Naive thymus-derived CD4-positive, alpha-beta T cell (primary cell): ENCODE measurements at regions of chr5 and their contacts with region 1.

Region 1: DNA sequence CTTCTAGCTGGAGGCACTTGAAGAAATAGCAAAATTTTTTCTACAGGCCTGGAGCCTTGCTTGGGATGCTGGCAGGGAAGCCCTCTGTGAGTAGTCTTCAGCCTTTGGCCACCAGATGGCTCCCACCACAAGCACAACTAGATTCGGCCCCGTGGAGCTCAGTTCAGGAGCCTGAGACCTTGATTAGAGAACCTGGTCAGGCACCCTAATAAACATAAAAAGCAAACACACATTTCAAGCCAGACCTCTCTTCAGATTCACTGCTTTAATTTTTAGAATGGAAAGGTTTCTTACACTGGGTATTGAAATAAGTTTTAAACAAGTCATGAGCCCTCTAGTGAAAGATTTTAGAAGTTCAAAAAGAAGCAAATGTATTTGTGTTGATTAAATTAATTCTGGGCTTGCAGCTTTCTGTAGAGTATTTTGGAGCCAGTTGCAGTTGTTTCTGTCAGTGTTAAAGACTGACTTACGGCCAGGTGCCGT is 41.4 kb downstream of the GLRX start:
- DNase-seq: peak; percentile 38 to 77 (median 71)
- ATAC-seq: peak; percentile 93
- H3K4me3 ChIP-seq: peak overlapping the region; percentile 45
- H3K4me3 Mint-ChIP-seq: peak overlapping the region in 9 of 10 donors; percentile 52 to 85 (median 84)
- H3K27ac ChIP-seq: peak overlapping the region; percentile 39
- H3K27ac Mint-ChIP-seq: peak overlapping the region in 8 of 9 donors; percentile 48 to 84 (median 62)
- H3K4me1 ChIP-seq: no peaks in the 10 kb centered on the region
- H3K4me1 Mint-ChIP-seq: peaks cover 0 to 21% (median 19%) of the 10 kb centered on the region in 7 donors
- H3K27me3 ChIP-seq: no peaks in the 10 kb centered on the region
- H3K27me3 Mint-ChIP-seq: peaks cover 0 to 8% (median 0%) of the 10 kb centered on the region in 5 donors

Region 2: DNA sequence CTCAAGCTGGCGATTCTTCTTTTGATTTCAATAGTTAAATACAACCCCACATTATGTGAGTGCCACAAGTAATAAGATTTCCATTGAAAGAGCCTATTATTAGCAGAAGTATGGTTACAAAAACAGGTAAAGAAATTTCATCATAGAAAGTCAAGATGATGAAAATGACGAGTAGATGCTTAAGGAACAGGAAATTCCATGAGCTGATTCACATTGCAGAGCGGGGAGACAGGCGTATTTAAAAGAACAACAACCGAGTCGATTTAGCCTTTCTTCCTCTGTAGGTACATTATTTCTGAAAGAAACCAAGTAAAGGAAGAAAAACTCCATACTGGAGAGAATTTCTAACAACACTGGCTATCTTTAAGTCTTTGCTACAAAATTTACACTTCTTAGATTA is 852.3 kb before region 1 on chr5:
- CTCF ChIA-PET with region 1: no interaction called
- POLR2A ChIA-PET with region 1: no interaction called
- intact Hi-C with region 1: no loop called
- DNase-seq: no peak
- ATAC-seq: no peak
- H3K4me3 ChIP-seq: no peak overlapping the region
- H3K4me3 Mint-ChIP-seq: no peak overlapping the region
- H3K27ac ChIP-seq: no peak overlapping the region
- H3K27ac Mint-ChIP-seq: no peak overlapping the region
- H3K4me1 ChIP-seq: no peaks in the 10 kb centered on the region
- H3K4me1 Mint-ChIP-seq: no peaks in the 10 kb centered on the region
- H3K27me3 ChIP-seq: no peaks in the 10 kb centered on the region
- H3K27me3 Mint-ChIP-seq: peaks cover 0 to 5% (median 0%) of the 10 kb centered on the region in 5 donors

Region 3: DNA sequence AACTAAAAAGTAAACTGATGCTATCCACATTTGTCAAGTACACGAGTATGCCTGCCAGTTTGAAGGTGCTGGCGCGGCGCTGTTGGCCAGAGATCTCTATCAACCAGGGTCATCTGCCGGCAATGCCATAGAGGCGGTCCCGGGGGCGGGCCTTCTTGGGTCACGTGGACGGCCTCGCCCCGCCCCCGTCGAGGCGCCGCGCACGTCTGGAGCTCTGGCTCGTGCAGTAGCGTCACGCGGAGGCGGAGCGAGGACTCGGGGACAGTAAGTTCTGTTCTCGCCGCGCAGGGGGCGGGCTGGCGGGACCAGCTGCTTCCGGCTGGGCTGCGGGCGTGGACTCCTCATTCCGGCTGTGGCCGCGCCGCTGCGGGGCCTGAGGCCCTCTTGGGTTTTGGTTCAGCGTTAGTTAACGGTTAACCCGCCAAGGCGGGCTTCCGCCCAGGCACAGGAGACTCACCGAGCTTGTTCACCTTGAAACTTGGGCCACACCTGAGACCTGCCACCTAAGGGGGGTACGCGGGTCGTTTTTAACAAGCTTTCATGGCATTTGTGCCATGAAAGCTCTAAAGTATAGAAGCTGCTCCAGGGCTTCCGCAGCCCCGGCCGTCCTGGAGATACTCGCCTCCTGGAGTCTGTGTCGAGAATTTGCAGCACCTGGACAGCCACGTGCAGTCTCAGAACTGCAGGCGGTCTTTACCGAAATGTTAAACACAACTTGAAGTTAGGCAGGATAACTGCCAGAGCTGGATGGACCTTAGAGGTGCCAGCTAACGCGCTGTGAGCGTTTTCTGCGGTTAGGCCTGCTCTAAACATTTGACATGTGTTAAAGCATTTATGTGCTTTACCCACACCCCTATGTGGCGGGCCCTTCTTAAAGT is 134.3 kb before region 1 on chr5 and contains the start of gene RFESD:
- CTCF ChIA-PET with region 1: interaction called, 20 read pairs
- POLR2A ChIA-PET with region 1: interaction called, 4 read pairs
- intact Hi-C with region 1: loop called (anchors 1 kb)
- DNase-seq: peak; percentile 84 to 94 (median 90)
- ATAC-seq: peak; percentile 98
- H3K4me3 ChIP-seq: peak within 1 kb of the TSS; percentile 80
- H3K4me3 Mint-ChIP-seq: peak within 1 kb of the TSS; percentile 84 to 93 (median 88)
- H3K27ac ChIP-seq: peak within 1 kb of the TSS; percentile 80
- H3K27ac Mint-ChIP-seq: peak within 1 kb of the TSS; percentile 71 to 95 (median 89)
- H3K4me1 ChIP-seq: peaks cover 0 to 18% of the 10 kb centered on the region in 2 donors
- H3K4me1 Mint-ChIP-seq: peaks cover 7 to 53% (median 40%) of the 10 kb centered on the region in 7 donors
- H3K27me3 ChIP-seq: no peaks in the 10 kb centered on the region
- H3K27me3 Mint-ChIP-seq: no peaks in the 10 kb centered on the region
- total RNA-seq, gene RFESD: 2.2 to 9.2 (median 6.5) TPM

Region 4: GRCh38 chr5:95770830-95771708 is 10.1 kb before region 1 on chr5:
- CTCF ChIA-PET with region 1: interaction called, 22 read pairs
- POLR2A ChIA-PET with region 1: interaction called, 4 read pairs
- intact Hi-C with region 1: no loop called
- DNase-seq: no peak
- ATAC-seq: no peak
- H3K4me3 ChIP-seq: no peak overlapping the region
- H3K4me3 Mint-ChIP-seq: no peak overlapping the region
- H3K27ac ChIP-seq: no peak overlapping the region
- H3K27ac Mint-ChIP-seq: no peak overlapping the region
- H3K4me1 ChIP-seq: no peaks in the 10 kb centered on the region
- H3K4me1 Mint-ChIP-seq: peaks cover 0 to 9% (median 0%) of the 10 kb centered on the region in 7 donors
- H3K27me3 ChIP-seq: no peaks in the 10 kb centered on the region
- H3K27me3 Mint-ChIP-seq: peaks cover 0 to 25% (median 0%) of the 10 kb centered on the region in 5 donors

Region 5: GRCh38 chr5:95808686-95809413 is 27.7 kb after region 1 on chr5:
- CTCF ChIA-PET with region 1: interaction called, 33 read pairs
- POLR2A ChIA-PET with region 1: interaction called, 3 read pairs
- intact Hi-C with region 1: loop called (anchors 1 kb)
- DNase-seq: peak; percentile 54 to 92 (median 88)
- ATAC-seq: peak; percentile 100
- H3K4me3 ChIP-seq: peak overlapping the region; percentile 24
- H3K4me3 Mint-ChIP-seq: peak overlapping the region; percentile 21 to 84 (median 76)
- H3K27ac ChIP-seq: peak overlapping the region; percentile 75
- H3K27ac Mint-ChIP-seq: peak overlapping the region; percentile 76 to 98 (median 90)
- H3K4me1 ChIP-seq: peaks cover 31 to 49% of the 10 kb centered on the region in 2 donors
- H3K4me1 Mint-ChIP-seq: peaks cover 53 to 71% (median 64%) of the 10 kb centered on the region in 7 donors
- H3K27me3 ChIP-seq: no peaks in the 10 kb centered on the region
- H3K27me3 Mint-ChIP-seq: no peaks in the 10 kb centered on the region

Region 6: GRCh38 chr5:95846554-95847260 is 65.6 kb after region 1 on chr5:
- CTCF ChIA-PET with region 1: interaction called, 357 read pairs
- POLR2A ChIA-PET with region 1: interaction called, 16 read pairs
- intact Hi-C with region 1: loop called (anchors 1 kb)
- DNase-seq: peak; percentile 38 to 73 (median 68)
- ATAC-seq: peak; percentile 88
- H3K4me3 ChIP-seq: no peak overlapping the region
- H3K4me3 Mint-ChIP-seq: no peak overlapping the region
- H3K27ac ChIP-seq: no peak overlapping the region
- H3K27ac Mint-ChIP-seq: peak overlapping the region in 2 of 9 donors; percentile 3 to 18
- H3K4me1 ChIP-seq: peaks cover 10 to 13% of the 10 kb centered on the region in 2 donors
- H3K4me1 Mint-ChIP-seq: peaks cover 10 to 33% (median 16%) of the 10 kb centered on the region in 7 donors
- H3K27me3 ChIP-seq: no peaks in the 10 kb centered on the region
- H3K27me3 Mint-ChIP-seq: peaks cover 0 to 15% (median 0%) of the 10 kb centered on the region in 5 donors

Region 7: DNA sequence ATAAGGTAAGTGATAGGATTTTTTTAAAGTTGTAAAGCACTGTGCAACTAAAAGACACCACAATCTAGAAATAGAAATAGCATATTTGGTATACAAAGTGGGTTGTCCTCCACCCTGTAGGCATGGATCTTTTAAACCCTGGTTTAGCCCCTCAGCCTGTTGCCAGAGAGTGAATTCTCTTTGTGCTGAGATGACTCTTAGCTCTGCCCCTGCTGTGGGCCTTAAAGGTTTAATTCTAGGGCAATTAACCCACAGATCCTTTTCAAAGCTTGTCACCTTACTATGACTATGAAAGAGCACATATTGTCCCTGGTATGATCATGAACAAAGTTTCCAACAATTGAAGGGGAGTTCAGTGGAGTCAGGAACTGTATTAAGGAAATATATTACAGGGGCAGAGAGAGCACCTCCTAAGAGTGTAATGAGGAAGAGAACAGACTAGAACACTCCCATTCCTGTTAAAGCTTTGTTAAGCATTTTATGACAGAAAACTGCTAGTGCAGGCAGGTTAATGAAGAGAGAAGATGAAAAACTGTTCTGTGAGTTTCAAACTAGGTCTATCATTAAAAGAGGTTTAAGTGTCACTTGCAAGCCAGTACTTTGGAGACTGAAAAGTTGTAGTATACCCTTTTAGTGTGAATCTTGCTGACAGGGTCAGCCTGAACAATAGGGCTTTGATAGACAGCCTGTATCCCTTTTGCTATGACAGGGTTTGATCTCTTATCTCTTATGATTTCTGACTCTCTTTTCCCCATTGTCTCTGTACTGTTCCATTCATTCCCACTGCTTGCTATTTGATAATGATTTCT is 284.6 kb after region 1 on chr5:
- CTCF ChIA-PET with region 1: no interaction called
- POLR2A ChIA-PET with region 1: no interaction called
- intact Hi-C with region 1: no loop called
- DNase-seq: no peak
- ATAC-seq: no peak
- H3K4me3 ChIP-seq: no peak overlapping the region
- H3K4me3 Mint-ChIP-seq: peak overlapping the region in 1 of 10 donors; percentile 7
- H3K27ac ChIP-seq: no peak overlapping the region
- H3K27ac Mint-ChIP-seq: peak overlapping the region in 1 of 9 donors; percentile 81
- H3K4me1 ChIP-seq: no peaks in the 10 kb centered on the region
- H3K4me1 Mint-ChIP-seq: peaks cover 0 to 30% (median 0%) of the 10 kb centered on the region in 7 donors
- H3K27me3 ChIP-seq: no peaks in the 10 kb centered on the region
- H3K27me3 Mint-ChIP-seq: no peaks in the 10 kb centered on the region

Region 8: GRCh38 chr5:96235008-96235910 is 454.1 kb after region 1 on chr5:
- CTCF ChIA-PET with region 1: no interaction called
- POLR2A ChIA-PET with region 1: no interaction called
- intact Hi-C with region 1: no loop called
- DNase-seq: no peak
- ATAC-seq: no peak
- H3K4me3 ChIP-seq: no peak overlapping the region
- H3K4me3 Mint-ChIP-seq: no peak overlapping the region
- H3K27ac ChIP-seq: no peak overlapping the region
- H3K27ac Mint-ChIP-seq: no peak overlapping the region
- H3K4me1 ChIP-seq: no peaks in the 10 kb centered on the region
- H3K4me1 Mint-ChIP-seq: no peaks in the 10 kb centered on the region
- H3K27me3 ChIP-seq: no peaks in the 10 kb centered on the region
- H3K27me3 Mint-ChIP-seq: peaks cover 3 to 28% (median 21%) of the 10 kb centered on the region in 5 donors

Region 9: DNA sequence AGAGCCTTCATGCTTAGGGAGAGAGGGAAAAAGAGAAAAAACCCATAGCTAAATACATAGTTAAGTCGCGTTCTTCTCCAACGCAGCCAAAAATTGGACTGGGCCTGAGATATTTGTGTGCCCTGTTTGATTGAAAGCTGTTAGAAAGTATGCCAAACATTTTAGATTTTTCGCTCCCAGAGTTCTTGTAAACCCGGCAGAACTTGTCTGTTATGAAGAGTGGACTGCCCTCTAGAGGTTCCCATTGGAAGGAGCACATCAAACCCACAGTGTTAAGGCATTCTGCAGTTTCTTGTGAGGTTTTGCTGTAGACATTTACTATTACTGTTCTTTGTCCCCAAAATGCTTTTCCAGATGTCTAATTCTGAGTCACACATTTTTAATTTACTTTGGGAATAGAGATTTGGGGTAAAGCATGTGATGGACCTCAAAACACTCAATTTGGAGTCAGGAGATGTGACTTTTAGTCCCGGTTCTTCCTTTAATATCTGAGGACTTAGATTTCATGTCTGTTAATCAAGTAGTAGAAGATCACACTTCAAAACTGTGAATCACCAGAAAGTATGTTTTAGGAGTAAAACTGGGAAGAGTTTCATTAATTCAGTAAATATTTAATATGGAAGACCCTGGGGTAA is 555.3 kb after region 1 on chr5:
- CTCF ChIA-PET with region 1: interaction called, 3 read pairs
- POLR2A ChIA-PET with region 1: no interaction called
- intact Hi-C with region 1: loop called (anchors 1 kb)
- DNase-seq: peak in 8 of 9 donors; percentile 41 to 72 (median 65)
- ATAC-seq: peak; percentile 92
- H3K4me3 ChIP-seq: no peak overlapping the region
- H3K4me3 Mint-ChIP-seq: no peak overlapping the region
- H3K27ac ChIP-seq: no peak overlapping the region
- H3K27ac Mint-ChIP-seq: no peak overlapping the region
- H3K4me1 ChIP-seq: no peaks in the 10 kb centered on the region
- H3K4me1 Mint-ChIP-seq: peaks cover 0 to 9% (median 0%) of the 10 kb centered on the region in 7 donors
- H3K27me3 ChIP-seq: no peaks in the 10 kb centered on the region
- H3K27me3 Mint-ChIP-seq: peaks cover 7 to 26% (median 14%) of the 10 kb centered on the region in 5 donors